ENCODE measurements at regions of chr4 and their contacts with region 1.

Region 1: GRCh38 chr4:185640811-185641675 is 105.7 kb upstream of the PDLIM3 start:
- DNase-seq: peak; percentile 63
- ATAC-seq: peak; percentile 78
- H3K4me3 ChIP-seq: no peak overlapping the region
- H3K27ac ChIP-seq: no peak overlapping the region
- H3K4me1 ChIP-seq: no peaks in the 10 kb centered on the region
- H3K27me3 ChIP-seq: no peaks in the 10 kb centered on the region
- CTCF ChIP-seq: peak; percentile 32 to 57 (median 51); a peak in 4 of 6 replicates
- POLR2A ChIP-seq: no peak
- RAD21 ChIP-seq: peak; percentile 66

Region 2: DNA sequence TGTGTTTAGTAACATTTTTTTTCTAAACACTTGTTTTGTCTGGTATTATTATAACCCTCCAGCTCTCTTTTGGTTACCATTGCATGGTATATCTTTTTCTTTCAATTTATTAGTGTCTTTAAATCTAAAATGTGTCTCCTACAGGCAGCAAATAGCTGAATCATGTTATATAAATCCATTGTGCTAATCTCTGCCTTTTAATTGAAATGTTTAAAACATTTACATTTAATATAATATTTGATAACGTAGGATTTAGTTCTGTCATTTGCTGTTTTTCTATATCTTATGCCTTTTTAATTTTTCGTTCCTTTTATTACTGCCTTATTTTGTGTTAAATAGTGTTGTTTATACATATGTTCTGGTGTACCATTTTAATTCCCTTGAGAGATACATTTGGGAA is 152.4 kb before region 1 on chr4:
- CTCF ChIA-PET with region 1: no interaction called
- POLR2A ChIA-PET with region 1: no interaction called
- RAD21 ChIA-PET with region 1: no interaction called
- intact Hi-C with region 1: no loop called
- DNase-seq: no peak
- ATAC-seq: no peak
- H3K4me3 ChIP-seq: no peak overlapping the region
- H3K27ac ChIP-seq: no peak overlapping the region
- H3K4me1 ChIP-seq: no peaks in the 10 kb centered on the region
- H3K27me3 ChIP-seq: no peaks in the 10 kb centered on the region
- CTCF ChIP-seq: no peak
- POLR2A ChIP-seq: no peak
- RAD21 ChIP-seq: no peak

Region 3: DNA sequence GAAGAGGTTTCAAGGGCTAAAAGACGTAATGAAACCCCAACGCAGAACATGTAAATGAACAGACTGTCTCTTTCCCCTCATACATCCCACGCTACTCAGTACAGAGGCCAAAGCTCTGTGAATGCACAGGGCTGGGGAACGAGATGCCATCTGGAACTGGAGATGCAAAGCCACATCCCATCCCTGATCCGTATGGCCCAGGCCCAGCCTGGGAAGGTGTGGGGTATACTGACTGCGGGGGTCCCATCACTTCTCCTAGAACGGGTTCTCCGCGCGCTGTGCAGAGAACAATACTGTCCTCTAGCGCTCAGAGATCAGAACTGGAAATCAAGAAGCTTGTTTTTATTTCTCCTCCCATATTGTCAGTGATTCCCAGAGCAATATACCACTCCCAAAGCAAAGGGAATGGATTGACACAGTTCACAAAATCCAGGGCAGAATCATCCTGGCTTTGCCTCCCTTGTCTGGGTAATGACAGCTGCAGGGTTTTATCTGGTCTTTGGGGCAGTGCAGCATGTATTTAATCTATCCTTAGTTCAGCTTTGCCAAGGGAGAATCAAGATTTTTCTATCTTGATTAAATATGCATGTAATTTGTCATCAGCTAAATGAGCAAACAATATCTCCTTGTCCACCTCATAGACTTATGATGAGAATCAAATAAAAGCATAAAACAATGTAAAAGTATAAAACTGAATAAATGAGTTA is 380.6 kb after region 1 on chr4:
- CTCF ChIA-PET with region 1: interaction called, 34 read pairs
- POLR2A ChIA-PET with region 1: no interaction called
- RAD21 ChIA-PET with region 1: interaction called, 3 to 4 read pairs
- intact Hi-C with region 1: loop called (anchors 5 kb)
- DNase-seq: no peak
- ATAC-seq: peak; percentile 62
- H3K4me3 ChIP-seq: no peak overlapping the region
- H3K27ac ChIP-seq: no peak overlapping the region
- H3K4me1 ChIP-seq: no peaks in the 10 kb centered on the region
- H3K27me3 ChIP-seq: no peaks in the 10 kb centered on the region
- CTCF ChIP-seq: peak; percentile 26 to 48 (median 43); a peak in 4 of 6 replicates
- POLR2A ChIP-seq: no peak
- RAD21 ChIP-seq: peak; percentile 66

Measured in HCT116 (cell line).